Activated CD8-positive, alpha-beta T cell treated with anti-CD3 and anti-CD28 coated beads, Interleukin-2, amount 10 ng/mL, durations not matched to agents 7 days and 5 days (primary cell): ENCODE measurements at regions of chr4 and their contacts with region 1.

Region 1: DNA sequence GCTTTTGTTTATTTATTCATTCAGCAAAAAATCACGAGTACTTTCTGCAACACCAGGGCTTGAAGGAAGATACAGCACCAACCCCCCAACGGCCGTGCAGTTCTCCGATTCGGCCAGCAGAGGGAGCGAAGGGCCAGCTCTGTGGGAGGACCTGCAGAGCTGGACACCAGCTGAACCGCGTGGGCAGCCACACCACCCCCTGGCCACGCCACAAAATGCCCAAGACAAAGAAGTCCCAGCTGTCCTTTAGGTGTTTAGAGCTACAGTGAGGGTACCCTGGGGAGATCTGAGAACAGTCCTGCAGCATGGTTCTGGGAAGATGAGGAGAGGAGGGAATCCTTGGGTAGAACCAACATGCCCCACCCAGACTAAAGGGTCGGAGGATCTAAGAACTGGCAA is 83.1 kb downstream of the RELL1 start:
- DNase-seq: peak; percentile 81
- ATAC-seq: peak; percentile 90
- H3K4me3 Mint-ChIP-seq: no peak overlapping the region
- H3K27ac Mint-ChIP-seq: no peak overlapping the region
- H3K4me1 Mint-ChIP-seq: peaks cover 21% of the 10 kb centered on the region
- H3K27me3 Mint-ChIP-seq: no peaks in the 10 kb centered on the region

Region 2: DNA sequence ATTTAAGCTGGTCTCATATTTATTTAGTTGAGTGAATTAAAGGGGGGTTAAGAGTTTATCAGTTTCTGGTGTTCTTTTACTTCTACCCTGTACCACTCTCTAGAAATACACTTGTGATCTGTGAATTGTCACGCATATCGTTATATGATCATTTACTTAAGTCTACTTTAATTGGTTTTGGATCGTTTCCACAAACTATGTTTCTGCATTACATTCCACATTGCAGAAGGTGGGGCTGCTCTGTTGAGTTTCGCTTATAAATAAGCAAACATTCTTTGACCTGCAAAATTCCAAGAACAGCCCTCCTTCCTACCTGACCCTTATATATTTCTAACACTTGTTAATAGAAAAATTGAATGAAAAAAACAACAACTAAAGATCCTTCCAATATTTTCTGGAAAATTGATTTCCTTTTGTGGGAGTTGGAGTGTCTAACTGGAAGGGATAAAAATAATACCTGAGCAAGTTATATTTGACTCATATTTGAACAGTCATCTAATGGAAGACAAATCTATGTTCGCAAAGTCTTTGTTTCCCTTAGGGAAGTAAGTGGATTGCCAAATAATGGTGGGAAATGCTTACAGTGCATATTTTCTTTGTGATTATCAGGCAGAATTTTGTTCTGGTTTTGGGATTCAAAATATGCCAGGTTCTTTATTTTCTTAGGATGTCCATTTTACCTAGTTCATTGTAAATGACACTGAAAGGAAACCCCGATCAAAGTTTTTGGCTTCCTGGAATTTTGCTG is 69.6 kb before region 1 on chr4:
- CTCF ChIA-PET with region 1: no interaction called
- POLR2A ChIA-PET with region 1: no interaction called
- DNase-seq: no peak
- ATAC-seq: no peak
- H3K4me3 Mint-ChIP-seq: no peak overlapping the region
- H3K27ac Mint-ChIP-seq: no peak overlapping the region
- H3K4me1 Mint-ChIP-seq: no peaks in the 10 kb centered on the region
- H3K27me3 Mint-ChIP-seq: no peaks in the 10 kb centered on the region

Region 3: GRCh38 chr4:37623125-37623524 is 20.1 kb after region 1 on chr4:
- CTCF ChIA-PET with region 1: interaction called, 12 read pairs
- POLR2A ChIA-PET with region 1: no interaction called
- DNase-seq: no peak
- ATAC-seq: no peak
- H3K4me3 Mint-ChIP-seq: no peak overlapping the region
- H3K27ac Mint-ChIP-seq: no peak overlapping the region
- H3K4me1 Mint-ChIP-seq: no peaks in the 10 kb centered on the region
- H3K27me3 Mint-ChIP-seq: no peaks in the 10 kb centered on the region

Region 4: GRCh38 chr4:37682701-37683401 is 79.8 kb after region 1 on chr4:
- CTCF ChIA-PET with region 1: interaction called, 15 read pairs
- POLR2A ChIA-PET with region 1: interaction called, 3 read pairs
- DNase-seq: peak; percentile 39
- ATAC-seq: no peak
- H3K4me3 Mint-ChIP-seq: peak overlapping the region; percentile 74
- H3K27ac Mint-ChIP-seq: peak overlapping the region; percentile 86
- H3K4me1 Mint-ChIP-seq: peaks cover 65% of the 10 kb centered on the region
- H3K27me3 Mint-ChIP-seq: no peaks in the 10 kb centered on the region

Region 5: DNA sequence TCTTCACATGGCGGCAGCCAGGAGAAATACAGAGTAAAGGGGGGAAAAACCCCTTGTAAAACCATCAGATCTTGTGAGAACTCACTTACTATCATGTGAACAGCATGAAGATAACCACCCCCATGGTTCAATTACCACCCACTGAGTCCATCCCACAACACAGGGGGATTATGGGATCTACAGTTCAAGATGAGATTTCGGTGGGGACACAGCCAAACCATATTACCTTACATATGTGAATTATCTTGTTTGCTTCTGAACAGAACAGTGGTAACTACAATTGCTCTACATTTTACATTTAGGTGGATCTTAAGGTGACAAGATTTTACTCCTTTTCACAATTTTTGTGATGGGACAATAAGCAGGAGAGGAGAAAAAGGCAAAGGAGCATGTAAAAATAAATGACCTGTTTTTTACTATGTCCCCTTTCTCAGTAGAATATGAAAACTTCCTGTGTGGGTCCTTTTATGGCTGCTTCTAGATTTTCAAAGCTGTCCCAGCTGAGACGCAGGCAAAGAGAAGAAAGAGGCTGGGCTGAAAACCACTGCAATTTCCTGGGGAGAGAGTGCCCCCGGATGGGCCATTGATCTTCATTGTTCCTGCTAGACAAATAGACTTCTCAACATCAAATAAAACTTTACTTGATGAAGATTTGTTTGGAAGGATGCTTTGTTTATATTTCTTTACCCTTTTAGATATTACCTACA is 177.5 kb after region 1 on chr4:
- CTCF ChIA-PET with region 1: interaction called, 32 read pairs
- POLR2A ChIA-PET with region 1: no interaction called
- DNase-seq: peak; percentile 77
- ATAC-seq: peak; percentile 97
- H3K4me3 Mint-ChIP-seq: no peak overlapping the region
- H3K27ac Mint-ChIP-seq: peak overlapping the region; percentile 81
- H3K4me1 Mint-ChIP-seq: peaks cover 19% of the 10 kb centered on the region
- H3K27me3 Mint-ChIP-seq: no peaks in the 10 kb centered on the region

Region 6: DNA sequence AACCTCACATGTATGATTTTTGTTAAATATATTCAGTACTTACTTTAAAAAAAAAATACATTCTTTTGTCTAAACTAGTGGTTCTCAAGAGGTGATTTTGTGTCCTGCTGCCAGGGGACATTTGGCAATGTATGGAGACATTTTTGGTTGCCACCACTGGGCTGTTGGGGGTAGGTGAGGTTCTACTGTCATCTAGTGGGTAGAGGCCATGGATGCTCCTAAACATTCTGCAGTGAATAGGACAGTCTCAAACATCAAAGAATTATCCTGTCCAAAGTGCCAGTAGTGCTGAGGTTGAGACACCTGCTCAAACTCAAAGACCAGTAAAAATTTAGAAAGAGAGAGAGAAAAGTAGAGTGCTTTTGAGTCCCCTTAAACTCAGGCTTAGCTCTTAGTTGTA is 190.5 kb after region 1 on chr4:
- CTCF ChIA-PET with region 1: interaction called, 16 read pairs
- POLR2A ChIA-PET with region 1: no interaction called
- DNase-seq: peak; percentile 31
- ATAC-seq: no peak
- H3K4me3 Mint-ChIP-seq: no peak overlapping the region
- H3K27ac Mint-ChIP-seq: no peak overlapping the region
- H3K4me1 Mint-ChIP-seq: no peaks in the 10 kb centered on the region
- H3K27me3 Mint-ChIP-seq: peaks cover 10% of the 10 kb centered on the region

Region 7: DNA sequence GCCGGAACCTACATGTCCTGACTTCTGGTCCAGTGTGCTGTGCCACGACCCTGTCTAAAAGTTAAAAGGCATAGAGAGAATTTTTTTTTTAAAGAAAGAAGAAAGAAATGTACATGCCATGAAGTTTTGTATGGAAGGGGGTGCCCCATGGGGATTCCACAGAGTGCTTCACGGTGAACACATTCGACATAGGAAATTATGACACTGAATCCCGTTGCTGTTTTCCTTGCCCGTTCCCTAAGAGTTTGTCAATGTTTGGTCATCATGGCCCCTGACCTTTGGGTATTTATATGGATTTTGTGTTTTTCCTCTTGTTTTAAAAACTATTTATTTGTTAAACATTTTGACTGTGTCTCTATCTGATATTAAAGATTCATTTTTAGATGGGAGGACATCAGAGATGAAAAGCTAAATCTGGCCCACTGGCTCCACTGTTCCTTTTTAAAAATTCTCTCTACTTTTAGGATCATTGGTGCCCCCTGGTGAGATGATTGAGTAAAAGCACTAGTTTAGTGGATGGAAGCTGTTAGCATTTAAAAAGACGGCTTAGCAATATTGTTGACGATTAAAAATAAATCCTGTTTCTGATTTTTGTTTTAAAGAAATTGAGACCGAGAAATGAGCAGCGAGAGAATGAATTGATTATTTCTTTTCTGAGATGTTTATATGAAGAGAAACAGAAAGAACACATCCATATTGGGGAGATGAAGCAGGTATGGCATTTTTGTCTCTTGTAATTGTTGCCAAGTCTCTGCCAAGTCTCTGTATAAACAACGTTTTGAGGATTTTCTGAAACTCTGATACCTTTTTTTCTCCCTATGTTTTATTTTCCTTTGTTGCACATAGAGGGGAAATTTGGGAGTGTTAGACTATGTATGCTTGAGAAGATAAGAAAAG is 432.2 kb after region 1 on chr4:
- CTCF ChIA-PET with region 1: interaction called, 11 read pairs
- POLR2A ChIA-PET with region 1: no interaction called
- DNase-seq: peak; percentile 54
- ATAC-seq: no peak
- H3K4me3 Mint-ChIP-seq: no peak overlapping the region
- H3K27ac Mint-ChIP-seq: no peak overlapping the region
- H3K4me1 Mint-ChIP-seq: no peaks in the 10 kb centered on the region
- H3K27me3 Mint-ChIP-seq: no peaks in the 10 kb centered on the region